Mucosa of descending colon (tissue), 3 donors: ENCODE measurements at regions of chr17 and their contacts with region 1.

Region 1: DNA sequence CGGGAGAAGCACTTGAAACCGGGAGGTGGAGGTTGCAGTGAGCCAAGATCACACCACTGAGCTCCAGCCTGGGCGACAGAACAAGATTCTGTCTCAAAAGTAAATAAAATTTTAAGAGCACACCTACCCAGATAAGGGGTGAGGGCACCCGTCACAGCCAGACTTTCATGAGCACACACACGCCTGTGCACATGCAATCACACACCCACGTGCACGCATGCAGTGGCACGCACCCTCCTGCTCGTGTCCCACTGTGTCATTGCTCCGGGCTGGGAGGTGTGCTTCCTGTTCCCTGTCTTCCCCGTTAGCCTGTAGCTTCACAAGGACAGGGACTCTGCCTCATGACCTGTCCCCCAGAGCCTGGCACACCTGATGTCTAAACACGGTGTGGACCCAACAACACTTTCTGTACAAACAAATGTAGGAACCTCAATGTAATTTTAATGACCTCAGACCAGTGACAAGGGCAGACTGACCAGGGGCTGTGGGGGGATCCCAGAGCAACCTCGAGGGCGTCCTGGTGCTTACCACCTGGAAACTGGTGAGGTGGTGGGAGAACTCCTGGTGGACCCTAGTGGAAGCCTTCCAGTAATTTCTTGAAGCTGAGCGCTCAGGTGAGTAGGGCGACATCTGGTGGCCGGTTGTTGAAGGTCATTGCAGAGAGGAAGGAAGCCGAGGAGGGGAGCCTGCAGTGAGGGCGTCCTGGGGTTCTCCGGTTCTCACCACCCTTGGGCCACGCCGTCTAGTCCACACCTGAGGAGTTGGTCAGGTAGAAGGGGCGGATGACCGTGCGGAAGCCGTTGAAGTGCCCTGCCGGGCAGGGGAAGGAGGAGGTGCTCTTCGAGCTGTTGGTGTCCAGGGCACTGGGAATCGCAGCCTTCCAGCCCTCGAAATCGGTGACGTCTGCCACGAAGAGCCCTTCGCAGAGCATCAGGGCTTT is 8.6 kb downstream of the LGALS3BP start:
- DNase-seq: peak in 2 of 3 donors; percentile 85 to 93
- ATAC-seq: peak; percentile 66
- H3K4me3 ChIP-seq: no peak overlapping the region
- H3K4me1 ChIP-seq: peaks cover 19% of the 10 kb centered on the region
- CTCF ChIP-seq: peak; percentile 61

Region 2: GRCh38 chr17:78865682-78866390 is 105.3 kb before region 1 on chr17:
- intact Hi-C with region 1: loop called (anchors 2 to 5 kb)
- DNase-seq: peak; percentile 79 to 92 (median 89)
- ATAC-seq: peak; percentile 91
- H3K4me3 ChIP-seq: no peak overlapping the region
- H3K4me1 ChIP-seq: no peaks in the 10 kb centered on the region
- CTCF ChIP-seq: peak; percentile 94